Heart right ventricle (tissue), 16 donors: ENCODE measurements at regions of chr11 and their contacts with region 1.

Region 1: DNA sequence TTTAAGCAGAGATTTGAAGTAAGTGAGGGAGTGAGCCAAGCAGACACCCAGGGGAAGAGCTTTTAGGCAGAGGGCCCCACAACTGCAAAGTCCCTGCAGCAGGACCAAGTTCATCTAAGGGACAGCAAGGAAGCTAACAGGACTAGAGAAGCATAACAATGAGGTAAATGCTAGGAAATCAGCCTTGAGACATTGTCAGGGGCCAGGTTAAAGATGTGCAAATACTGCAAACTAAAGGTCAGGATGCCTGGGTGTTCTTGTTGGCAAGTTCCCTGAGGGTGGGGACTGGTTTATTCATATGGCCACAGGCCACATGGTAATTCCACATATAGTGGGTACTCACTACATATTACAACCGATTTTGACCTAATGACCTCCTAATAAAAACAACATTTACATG is 399.2 kb upstream of the NARS2 start:
- DNase-seq: no peak
- ATAC-seq: no peak
- H3K4me3 ChIP-seq: no peak overlapping the region
- H3K27ac ChIP-seq: no peak overlapping the region
- H3K4me1 ChIP-seq: no peaks in the 10 kb centered on the region
- H3K27me3 ChIP-seq: peaks cover 0 to 8% (median 0%) of the 10 kb centered on the region in 7 donors
- CTCF ChIP-seq: no peak

Region 2: GRCh38 chr11:78525709-78526108 is 448.2 kb before region 1 on chr11:
- intact Hi-C with region 1: no loop called
- DNase-seq: no peak
- ATAC-seq: no peak
- H3K4me3 ChIP-seq: no peak overlapping the region
- H3K27ac ChIP-seq: no peak overlapping the region
- H3K4me1 ChIP-seq: no peaks in the 10 kb centered on the region
- H3K27me3 ChIP-seq: no peaks in the 10 kb centered on the region
- CTCF ChIP-seq: no peak

Region 3: DNA sequence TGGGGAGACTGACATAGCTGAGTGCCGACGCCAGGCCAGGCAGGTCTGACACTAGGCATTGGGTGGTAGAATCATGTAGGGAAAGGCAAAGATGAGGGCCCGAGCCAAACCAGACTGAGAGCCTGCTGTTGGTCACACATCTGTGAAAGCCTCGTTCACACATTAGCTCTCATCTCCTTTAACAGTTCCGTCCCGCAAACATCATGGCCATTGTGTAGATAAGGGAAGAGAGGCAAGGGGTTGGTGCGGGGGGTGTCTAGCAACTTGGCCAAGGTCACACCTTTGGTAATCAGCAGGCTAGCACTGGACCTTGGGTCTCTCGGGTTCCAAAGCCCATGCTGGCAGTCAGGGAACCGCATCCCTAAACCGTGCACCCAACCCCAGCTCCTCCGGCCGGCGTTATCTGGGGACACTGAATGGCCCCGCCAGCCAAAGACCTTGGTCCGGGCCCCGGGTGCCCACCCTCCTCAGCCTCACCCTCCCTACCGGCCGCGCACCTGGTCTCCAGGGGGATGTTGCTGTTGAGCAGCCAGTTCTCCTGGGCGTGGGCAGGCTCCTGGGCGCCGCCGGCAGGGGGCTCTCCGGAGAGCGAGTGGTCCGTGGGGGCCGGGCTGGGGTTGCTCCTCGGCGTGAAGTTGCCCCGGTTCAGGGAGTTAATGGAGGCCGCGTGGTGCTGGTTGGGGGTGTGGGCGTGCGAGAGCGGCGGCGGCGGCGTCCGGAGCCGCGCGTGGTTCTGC is 70.9 kb before region 1 on chr11:
- intact Hi-C with region 1: no loop called
- DNase-seq: peak in 1 of 2 donors; percentile 13
- ATAC-seq: peak in 2 of 8 donors; percentile 38
- H3K4me3 ChIP-seq: no peak overlapping the region
- H3K27ac ChIP-seq: no peak overlapping the region
- H3K4me1 ChIP-seq: peaks cover 0 to 7% (median 0%) of the 10 kb centered on the region in 9 donors
- H3K27me3 ChIP-seq: peaks cover 0 to 22% (median 0%) of the 10 kb centered on the region in 7 donors
- CTCF ChIP-seq: peak in 2 of 9 donors; percentile 6 to 7

Region 4: DNA sequence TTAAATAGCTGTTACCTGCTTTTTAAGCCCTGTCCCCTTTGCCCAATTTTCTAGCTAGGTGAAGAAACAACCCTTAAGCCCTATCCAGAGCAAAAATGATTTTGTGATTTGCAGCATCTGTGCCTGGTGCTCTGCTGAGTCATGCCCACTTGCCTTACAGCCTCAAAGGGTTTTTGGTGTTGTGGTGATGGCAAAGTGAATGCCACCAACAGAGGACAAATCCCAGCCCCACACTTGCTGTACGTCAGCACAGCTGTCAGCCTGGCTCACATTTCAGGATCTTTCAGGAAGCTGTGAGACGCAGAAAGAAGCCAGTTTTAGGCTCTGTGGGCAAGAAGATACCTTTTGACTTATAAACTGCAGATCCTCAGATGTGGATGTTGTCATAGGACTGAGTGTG is 65.2 kb after region 1 on chr11:
- intact Hi-C with region 1: loop called in 1 of 10 experiments (anchors 10 kb)
- DNase-seq: no peak
- ATAC-seq: no peak
- H3K4me3 ChIP-seq: no peak overlapping the region
- H3K27ac ChIP-seq: no peak overlapping the region
- H3K4me1 ChIP-seq: no peaks in the 10 kb centered on the region
- H3K27me3 ChIP-seq: peaks cover 0 to 41% (median 4%) of the 10 kb centered on the region in 7 donors
- CTCF ChIP-seq: no peak

Region 5: DNA sequence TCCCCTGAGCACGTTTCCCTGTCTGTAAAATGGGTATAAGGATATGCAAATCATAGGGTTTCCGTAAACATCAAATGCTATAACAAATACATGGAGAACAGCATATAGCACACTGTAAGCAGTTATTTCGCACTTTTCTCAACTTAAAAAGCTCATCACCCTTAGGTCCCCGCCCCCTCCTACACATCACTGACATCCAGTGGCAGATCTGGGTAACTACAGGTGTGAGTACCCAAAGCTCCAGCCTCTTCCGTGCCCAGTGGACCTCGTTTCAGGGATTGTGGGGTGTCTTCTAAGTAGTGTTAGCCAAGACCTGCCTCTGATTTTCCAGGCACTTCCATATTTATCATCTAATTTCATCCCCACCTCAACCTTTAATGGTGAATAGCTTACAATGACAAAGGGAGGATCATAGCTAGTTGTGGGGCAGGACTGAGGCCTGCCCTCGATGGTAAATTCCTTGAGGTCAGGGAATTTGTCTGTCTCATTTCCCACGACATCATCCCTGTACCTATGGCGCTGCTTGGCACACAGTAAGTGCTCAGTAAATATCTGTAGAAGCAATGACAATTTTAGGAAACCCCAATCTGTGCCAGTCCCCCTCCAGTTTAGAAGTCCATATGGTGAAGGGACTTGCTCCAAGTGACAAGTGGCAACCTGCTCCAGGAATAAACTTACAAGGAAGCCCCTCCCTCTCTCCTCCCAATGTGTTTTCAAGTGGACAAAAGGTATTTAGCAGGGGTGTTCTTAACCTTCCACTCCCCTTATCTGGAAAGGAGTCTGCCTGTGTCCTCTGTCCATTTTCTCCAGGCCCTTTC is 126.4 kb after region 1 on chr11:
- intact Hi-C with region 1: no loop called
- DNase-seq: no peak
- ATAC-seq: peak in 2 of 8 donors; percentile 40 to 69
- H3K4me3 ChIP-seq: no peak overlapping the region
- H3K27ac ChIP-seq: no peak overlapping the region
- H3K4me1 ChIP-seq: peaks cover 0 to 11% (median 0%) of the 10 kb centered on the region in 9 donors
- H3K27me3 ChIP-seq: peaks cover 0 to 7% (median 0%) of the 10 kb centered on the region in 7 donors
- CTCF ChIP-seq: peak; percentile 27 to 71 (median 66)